Posterior vena cava (tissue), 2 donors: ENCODE measurements at regions of chr6 and their contacts with region 1.

Region 1: GRCh38 chr6:91539456-91539855 is 952.6 kb upstream of the MAP3K7 start:
- DNase-seq: no peak

Region 2: DNA sequence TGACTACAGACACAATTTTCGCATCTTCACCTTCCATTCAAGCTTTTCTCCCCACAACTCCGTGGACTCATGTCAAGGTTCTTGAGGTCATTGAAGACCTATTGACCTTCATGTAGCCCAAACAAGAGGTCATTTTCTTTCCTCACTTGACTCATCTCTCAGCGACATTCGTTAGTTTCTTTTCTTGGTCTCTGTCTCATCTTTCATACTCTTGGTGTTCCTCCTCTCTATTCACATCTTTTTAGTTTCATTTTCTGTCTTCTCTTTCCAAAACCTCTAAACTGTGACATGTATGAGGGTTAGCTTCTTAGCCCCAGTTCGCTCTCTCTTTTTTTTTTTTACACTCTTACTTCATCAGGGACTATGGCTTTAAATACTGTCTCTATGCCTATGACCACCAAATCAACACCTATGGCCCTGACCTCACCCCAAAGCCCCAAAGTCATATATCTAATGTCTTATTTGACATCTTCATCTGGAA is 1114.3 kb before region 1 on chr6:
- intact Hi-C with region 1: no loop called
- DNase-seq: no peak

Region 3: GRCh38 chr6:91560409-91560808 is 21.0 kb after region 1 on chr6:
- intact Hi-C with region 1: loop called in 1 of 2 experiments (anchors 1 kb)
- DNase-seq: no peak